IMR-90 (cell line): ENCODE measurements at regions of chr15 and their contacts with region 1.

Region 1: DNA sequence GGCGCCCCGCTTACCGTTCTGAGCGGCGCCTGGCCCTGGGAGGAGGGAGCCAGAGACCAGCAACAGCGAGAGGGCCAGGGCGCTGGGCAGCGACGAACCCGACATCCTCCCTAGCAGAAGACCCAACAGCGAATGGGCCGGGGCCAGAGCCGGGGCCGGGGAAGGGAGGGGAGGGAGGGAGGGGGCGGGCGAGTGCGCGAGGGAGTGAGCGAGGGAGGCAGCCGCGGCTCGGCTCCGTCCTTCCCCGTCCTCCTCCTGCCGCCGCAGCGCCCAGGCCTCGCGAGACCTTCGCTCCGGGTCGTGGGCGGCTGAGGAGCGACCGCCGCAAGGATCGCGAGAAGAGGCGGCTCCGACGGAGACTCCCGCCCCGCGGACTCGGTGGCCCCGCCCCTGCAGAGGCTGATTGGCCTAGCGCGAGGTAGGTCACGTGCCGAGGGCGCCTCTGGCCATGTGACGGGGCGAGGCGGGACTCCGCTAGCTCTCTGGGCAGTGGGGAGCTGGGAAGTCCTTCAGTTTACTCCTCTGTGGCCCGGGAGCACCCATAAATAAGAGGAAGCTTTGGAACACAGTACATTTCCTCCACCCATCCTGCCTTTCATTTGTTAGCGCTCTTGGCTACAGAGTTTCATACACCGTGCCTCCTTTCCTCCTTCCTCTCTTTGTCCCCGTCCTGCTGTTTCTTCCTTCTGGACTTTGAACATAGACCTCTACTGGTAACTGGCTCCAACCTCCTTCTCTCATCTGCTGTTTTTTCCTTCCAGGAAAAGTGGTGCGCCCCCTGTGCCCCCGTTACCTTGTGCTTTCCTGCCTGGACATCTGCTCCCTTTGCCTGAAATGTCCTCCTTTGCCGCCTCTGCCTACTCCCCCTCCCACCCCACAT is at the start of gene NPTN:
- DNase-seq: peak; percentile 96
- ATAC-seq: peak; percentile 90
- H3K4me3 ChIP-seq: peak within 1 kb of the TSS; percentile 64
- H3K27ac ChIP-seq: peak within 1 kb of the TSS; percentile 95
- H3K4me1 ChIP-seq: peaks cover 15% of the 10 kb centered on the region
- H3K27me3 ChIP-seq: no peaks in the 10 kb centered on the region
- CTCF ChIP-seq: no peak
- POLR2A ChIP-seq: peak; percentile 85
- RAD21 ChIP-seq: no peak
- total RNA-seq, gene NPTN: 150 and 171 TPM in 2 replicates

Region 2: DNA sequence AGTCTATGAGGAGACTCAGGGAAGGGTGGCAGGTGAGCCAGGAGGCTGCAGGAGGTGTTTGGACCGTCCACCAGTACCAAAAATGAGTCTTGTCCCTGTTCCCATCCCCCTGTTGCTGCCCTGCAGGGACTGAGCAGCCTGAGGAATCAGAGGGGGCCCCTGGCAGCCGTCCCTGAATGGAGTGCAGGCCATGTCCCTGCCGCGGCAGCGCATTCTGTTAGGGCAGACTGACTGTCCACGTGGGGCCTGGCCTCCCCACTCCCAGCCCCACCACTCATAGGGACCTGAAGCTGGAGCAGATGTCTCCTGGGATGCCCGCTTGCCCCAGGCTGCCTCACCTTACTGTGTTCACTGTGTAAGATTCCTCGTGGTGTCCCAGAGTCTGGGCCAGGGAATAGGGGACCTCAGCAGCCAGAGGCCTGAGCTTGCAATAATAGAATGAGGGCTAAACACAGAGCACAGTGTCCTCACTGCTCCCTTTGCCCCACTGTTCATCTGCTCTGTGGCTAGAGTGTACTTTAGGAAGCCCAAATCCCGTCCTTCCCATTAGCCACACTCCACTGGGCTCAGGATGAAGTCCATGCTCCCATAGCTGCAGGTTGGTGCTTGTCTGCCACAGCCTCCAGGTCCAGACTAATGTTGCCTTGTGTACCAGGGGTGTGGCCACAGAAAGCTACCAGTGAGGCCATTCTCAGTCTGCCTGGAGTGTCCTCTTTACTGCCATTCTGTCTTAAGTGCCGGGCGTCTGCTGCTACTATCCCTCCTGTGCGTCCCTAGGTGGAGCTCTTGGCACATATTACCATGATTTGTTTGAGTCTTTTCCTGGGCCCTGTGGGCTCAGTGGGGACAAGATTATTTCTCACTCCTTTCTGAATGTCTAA is 327.8 kb before region 1 on chr15:
- CTCF ChIA-PET with region 1: interaction called, 6 read pairs
- POLR2A ChIA-PET with region 1: no interaction called
- dilution Hi-C with region 1: no loop called
- in situ Hi-C with region 1: no loop called
- intact Hi-C with region 1: loop called (anchors 1 kb)
- DNase-seq: peak; percentile 65
- ATAC-seq: peak; percentile 97
- H3K4me3 ChIP-seq: no peak overlapping the region
- H3K27ac ChIP-seq: no peak overlapping the region
- H3K4me1 ChIP-seq: no peaks in the 10 kb centered on the region
- H3K27me3 ChIP-seq: no peaks in the 10 kb centered on the region
- CTCF ChIP-seq: peak; percentile 66
- POLR2A ChIP-seq: no peak
- RAD21 ChIP-seq: peak; percentile 67

Region 3: GRCh38 chr15:73560501-73561117 is 72.7 kb before region 1 on chr15:
- CTCF ChIA-PET with region 1: interaction called, 33 read pairs
- POLR2A ChIA-PET with region 1: no interaction called
- dilution Hi-C with region 1: no loop called
- in situ Hi-C with region 1: no loop called
- intact Hi-C with region 1: loop called (anchors 1 kb)
- DNase-seq: peak; percentile 84
- ATAC-seq: peak; percentile 70
- H3K4me3 ChIP-seq: no peak overlapping the region
- H3K27ac ChIP-seq: no peak overlapping the region
- H3K4me1 ChIP-seq: peaks cover 13% of the 10 kb centered on the region
- H3K27me3 ChIP-seq: no peaks in the 10 kb centered on the region
- CTCF ChIP-seq: peak; percentile 69
- POLR2A ChIP-seq: no peak
- RAD21 ChIP-seq: peak; percentile 76

Region 4: DNA sequence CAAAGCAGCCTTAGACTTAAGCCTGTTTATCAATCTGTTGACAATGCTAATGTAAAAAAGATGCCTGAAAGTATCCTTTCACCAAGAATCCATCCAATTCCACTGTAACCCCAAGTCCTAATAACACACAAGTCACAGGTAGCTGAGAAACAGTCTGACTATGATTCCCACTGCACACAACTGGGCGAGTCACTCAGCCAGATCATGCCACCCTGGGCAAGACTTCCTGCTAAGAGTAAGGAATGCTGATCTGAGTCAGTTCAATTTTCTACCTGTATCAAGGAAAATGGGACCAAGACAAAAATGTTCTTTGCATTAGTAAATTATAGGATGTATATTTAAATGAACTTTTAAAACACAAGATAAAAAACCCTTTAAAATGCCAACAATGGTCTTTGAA is 33.4 kb before region 1 on chr15:
- CTCF ChIA-PET with region 1: interaction called, 6 read pairs
- POLR2A ChIA-PET with region 1: no interaction called
- dilution Hi-C with region 1: no loop called
- in situ Hi-C with region 1: no loop called
- intact Hi-C with region 1: loop called (anchors 2 kb)
- DNase-seq: peak; percentile 45
- ATAC-seq: no peak
- H3K4me3 ChIP-seq: no peak overlapping the region
- H3K27ac ChIP-seq: no peak overlapping the region
- H3K4me1 ChIP-seq: peaks cover 31% of the 10 kb centered on the region
- H3K27me3 ChIP-seq: no peaks in the 10 kb centered on the region
- CTCF ChIP-seq: no peak
- POLR2A ChIP-seq: no peak
- RAD21 ChIP-seq: no peak

Region 5: DNA sequence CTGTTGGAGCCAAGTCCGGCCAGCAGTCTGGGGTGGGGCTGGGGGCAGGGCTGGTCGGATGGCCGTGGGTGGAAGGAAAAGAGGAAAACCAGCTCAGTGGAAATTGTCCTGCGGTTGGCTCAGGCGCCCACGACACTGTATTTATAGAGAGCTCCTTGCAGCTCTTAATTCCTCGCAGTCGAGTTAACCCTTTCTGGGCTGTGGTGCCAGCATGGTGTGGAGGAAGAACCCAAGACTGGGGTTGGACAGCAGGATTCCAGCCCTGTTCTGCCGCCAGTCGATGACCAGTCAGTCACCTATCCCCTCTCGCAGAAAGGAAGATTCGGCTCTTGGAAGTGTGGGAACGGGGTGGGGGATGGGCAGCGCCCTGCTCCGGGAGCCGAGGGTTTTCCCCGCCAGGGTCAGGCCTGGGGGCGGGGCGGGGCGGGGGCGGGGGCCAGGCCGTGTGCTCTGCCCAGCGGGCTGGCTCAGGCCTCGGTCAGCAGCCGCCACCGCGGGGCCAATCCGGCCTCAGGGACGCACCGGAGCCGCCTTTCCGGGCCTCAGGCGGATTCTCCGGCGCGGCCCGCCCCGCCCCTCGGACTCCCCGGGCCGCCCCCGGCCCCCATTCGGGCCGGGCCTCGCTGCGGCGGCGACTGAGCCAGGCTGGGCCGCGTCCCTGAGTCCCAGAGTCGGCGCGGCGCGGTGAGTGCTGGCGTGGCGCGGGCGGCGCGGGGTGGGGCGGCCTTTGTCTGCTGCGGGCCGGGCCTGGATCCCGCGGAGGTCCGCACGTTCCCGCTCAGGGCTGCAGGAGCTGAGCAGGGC is 50.6 kb after region 1 on chr15 and contains the start of gene CD276:
- CTCF ChIA-PET with region 1: interaction called, 8 read pairs
- POLR2A ChIA-PET with region 1: no interaction called
- dilution Hi-C with region 1: no loop called
- in situ Hi-C with region 1: no loop called
- intact Hi-C with region 1: loop called (anchors 5 kb)
- DNase-seq: peak; percentile 64
- ATAC-seq: peak; percentile 89
- H3K4me3 ChIP-seq: peak within 1 kb of the TSS; percentile 98
- H3K27ac ChIP-seq: peak within 1 kb of the TSS; percentile 87
- H3K4me1 ChIP-seq: peaks cover 32% of the 10 kb centered on the region
- H3K27me3 ChIP-seq: no peaks in the 10 kb centered on the region
- CTCF ChIP-seq: no peak
- POLR2A ChIP-seq: peak; percentile 47
- RAD21 ChIP-seq: peak; percentile 30
- total RNA-seq, gene CD276: 30.8 and 37.5 TPM in 2 replicates

Region 6: DNA sequence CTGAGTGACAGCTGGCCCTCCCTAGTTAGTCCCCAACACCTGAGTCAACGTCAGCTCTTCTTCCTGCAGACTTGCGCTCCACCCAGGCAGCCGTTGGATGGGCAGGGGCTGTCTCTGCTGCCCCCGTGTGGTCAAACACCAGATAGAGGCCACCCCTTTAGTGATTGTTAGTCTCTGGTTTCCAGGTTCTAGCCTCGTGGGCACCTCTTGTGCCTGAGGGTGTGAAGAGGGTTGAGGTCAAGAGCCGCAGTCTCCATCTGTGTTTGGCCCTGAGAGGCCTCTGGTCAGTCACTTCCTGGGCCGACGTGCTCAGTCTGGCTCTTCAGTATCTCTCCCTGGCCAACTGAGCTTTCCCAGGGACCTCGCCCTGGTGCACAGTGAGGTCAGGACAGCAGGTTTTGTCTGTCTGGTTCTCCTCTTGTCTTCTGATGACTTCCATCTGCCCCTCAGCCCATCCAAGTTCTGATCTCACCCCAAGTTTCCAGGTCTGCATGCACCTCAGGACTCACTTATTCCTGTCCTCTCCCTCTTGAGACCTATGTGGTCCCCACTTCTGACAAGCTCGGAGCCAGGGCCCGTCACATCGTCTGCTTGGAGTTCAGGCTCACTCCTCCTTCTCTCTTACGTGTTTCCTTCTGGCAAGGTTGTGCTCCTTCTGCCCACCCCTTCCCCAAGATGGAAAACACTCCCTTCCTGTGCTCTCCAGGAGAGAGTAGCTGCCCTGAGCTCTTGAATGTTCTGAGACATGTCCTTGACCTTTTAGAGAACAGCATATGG is 71.7 kb after region 1 on chr15:
- CTCF ChIA-PET with region 1: interaction called, 14 read pairs
- POLR2A ChIA-PET with region 1: no interaction called
- dilution Hi-C with region 1: no loop called
- in situ Hi-C with region 1: no loop called
- intact Hi-C with region 1: no loop called
- DNase-seq: peak; percentile 28
- ATAC-seq: peak; percentile 72
- H3K4me3 ChIP-seq: no peak overlapping the region
- H3K27ac ChIP-seq: no peak overlapping the region
- H3K4me1 ChIP-seq: no peaks in the 10 kb centered on the region
- H3K27me3 ChIP-seq: no peaks in the 10 kb centered on the region
- CTCF ChIP-seq: peak; percentile 76
- POLR2A ChIP-seq: no peak
- RAD21 ChIP-seq: peak; percentile 66

Region 7: GRCh38 chr15:73763931-73764330 is 130.6 kb after region 1 on chr15:
- CTCF ChIA-PET with region 1: no interaction called
- POLR2A ChIA-PET with region 1: no interaction called
- dilution Hi-C with region 1: no loop called
- in situ Hi-C with region 1: no loop called
- intact Hi-C with region 1: no loop called
- DNase-seq: no peak
- ATAC-seq: no peak
- H3K4me3 ChIP-seq: no peak overlapping the region
- H3K27ac ChIP-seq: no peak overlapping the region
- H3K4me1 ChIP-seq: no peaks in the 10 kb centered on the region
- H3K27me3 ChIP-seq: peaks cover 76% of the 10 kb centered on the region
- CTCF ChIP-seq: no peak
- POLR2A ChIP-seq: no peak
- RAD21 ChIP-seq: no peak